ENCODE measurements at regions of chr15 and their contacts with region 1.

Region 1: GRCh38 chr15:47773163-47773562 is 55.9 kb downstream of the SEMA6D start:
- DNase-seq: peak; percentile 4
- ATAC-seq: no peak
- H3K4me3 ChIP-seq: no peak overlapping the region
- H3K27ac ChIP-seq: no peak overlapping the region
- H3K4me1 ChIP-seq: 0 out of 2 replicates have a peak, but pooled peaks cover 3% of the 10 kb centered on the region
- H3K27me3 ChIP-seq: no peaks in the 10 kb centered on the region
- CTCF ChIP-seq: no peak

Region 2: GRCh38 chr15:47908950-47909670 is 135.9 kb after region 1 on chr15:
- CTCF ChIA-PET with region 1: no interaction called
- POLR2A ChIA-PET with region 1: no interaction called
- intact Hi-C with region 1: loop called (anchors 10 kb)
- DNase-seq: peak; percentile 10
- ATAC-seq: peak; percentile 45; the same call in 1 of the 2 replicates
- H3K4me3 ChIP-seq: no peak overlapping the region
- H3K27ac ChIP-seq: no peak overlapping the region
- H3K4me1 ChIP-seq: no peaks in the 10 kb centered on the region; the same call in 1 of the 2 replicates
- H3K27me3 ChIP-seq: no peaks in the 10 kb centered on the region
- CTCF ChIP-seq: no peak

Region 3: GRCh38 chr15:48131324-48131723 is 358.2 kb after region 1 on chr15:
- CTCF ChIA-PET with region 1: no interaction called
- POLR2A ChIA-PET with region 1: no interaction called
- intact Hi-C with region 1: no loop called
- DNase-seq: no peak
- ATAC-seq: no peak
- H3K4me3 ChIP-seq: no peak overlapping the region
- H3K27ac ChIP-seq: no peak overlapping the region
- H3K4me1 ChIP-seq: no peaks in the 10 kb centered on the region
- H3K27me3 ChIP-seq: no peaks in the 10 kb centered on the region
- CTCF ChIP-seq: no peak

Region 4: GRCh38 chr15:48250640-48251076 is 477.5 kb after region 1 on chr15:
- CTCF ChIA-PET with region 1: no interaction called
- POLR2A ChIA-PET with region 1: no interaction called
- intact Hi-C with region 1: no loop called
- DNase-seq: peak; percentile 60
- ATAC-seq: no peak; the same call in 1 of the 2 replicates
- H3K4me3 ChIP-seq: no peak overlapping the region
- H3K27ac ChIP-seq: no peak overlapping the region
- H3K4me1 ChIP-seq: no peaks in the 10 kb centered on the region
- H3K27me3 ChIP-seq: no peaks in the 10 kb centered on the region
- CTCF ChIP-seq: peak; percentile 66